HEK293 (cell line): ENCODE measurements at regions of chr1 and their contacts with region 1.

Region 1: DNA sequence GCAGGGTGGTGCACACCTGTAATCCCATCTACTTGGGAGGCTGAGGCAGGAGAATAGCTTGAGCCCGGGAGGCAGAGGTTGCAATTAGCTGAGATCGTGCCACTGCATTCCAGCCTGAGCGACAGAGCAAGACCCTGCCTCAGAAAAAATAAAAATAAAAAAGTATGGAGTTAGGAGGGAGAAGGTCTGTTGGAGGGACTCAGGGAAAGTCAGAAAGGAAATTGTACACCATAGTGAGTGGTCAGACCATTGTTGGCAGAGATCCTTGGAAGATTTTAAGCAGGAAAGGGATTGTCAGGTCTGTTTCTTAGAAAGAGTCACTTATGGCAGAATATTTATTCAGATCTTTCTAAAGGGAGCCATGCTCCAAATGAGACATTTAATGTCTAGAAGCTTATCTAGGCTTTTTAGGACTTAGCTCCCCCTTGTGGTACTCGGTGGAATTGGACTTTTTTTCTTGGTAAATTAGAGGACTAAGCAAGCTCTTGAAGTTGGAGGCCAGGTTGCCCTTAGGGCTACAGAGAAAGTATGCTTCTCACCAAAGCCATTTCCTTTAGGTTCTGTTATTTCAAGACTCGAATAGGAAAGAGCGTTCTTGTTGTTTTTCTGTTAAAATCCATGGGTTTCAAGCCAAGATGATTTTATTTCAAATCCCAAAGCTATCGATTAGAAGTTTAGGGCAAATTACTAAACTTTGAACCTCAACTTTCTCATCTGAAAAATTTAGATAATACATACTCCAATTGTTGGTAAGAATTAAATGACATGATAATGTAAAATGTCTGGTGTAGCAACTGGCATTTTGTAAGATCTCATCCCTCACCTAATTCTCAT is 16.5 kb downstream of the MIA3 start:
- H3K4me3 ChIP-seq: no peak overlapping the region
- H3K27ac ChIP-seq: no peak overlapping the region
- H3K4me1 ChIP-seq: no peaks in the 10 kb centered on the region
- CTCF ChIP-seq: peak; percentile 46; the same call in 1 of the 2 replicates

Region 2: GRCh38 chr1:222523852-222524251 is 110.5 kb before region 1 on chr1:
- CTCF ChIA-PET with region 1: no interaction called
- POLR2A ChIA-PET with region 1: no interaction called
- H3K4me3 ChIP-seq: no peak overlapping the region
- H3K27ac ChIP-seq: no peak overlapping the region
- H3K4me1 ChIP-seq: no peaks in the 10 kb centered on the region
- CTCF ChIP-seq: no peak

Region 3: DNA sequence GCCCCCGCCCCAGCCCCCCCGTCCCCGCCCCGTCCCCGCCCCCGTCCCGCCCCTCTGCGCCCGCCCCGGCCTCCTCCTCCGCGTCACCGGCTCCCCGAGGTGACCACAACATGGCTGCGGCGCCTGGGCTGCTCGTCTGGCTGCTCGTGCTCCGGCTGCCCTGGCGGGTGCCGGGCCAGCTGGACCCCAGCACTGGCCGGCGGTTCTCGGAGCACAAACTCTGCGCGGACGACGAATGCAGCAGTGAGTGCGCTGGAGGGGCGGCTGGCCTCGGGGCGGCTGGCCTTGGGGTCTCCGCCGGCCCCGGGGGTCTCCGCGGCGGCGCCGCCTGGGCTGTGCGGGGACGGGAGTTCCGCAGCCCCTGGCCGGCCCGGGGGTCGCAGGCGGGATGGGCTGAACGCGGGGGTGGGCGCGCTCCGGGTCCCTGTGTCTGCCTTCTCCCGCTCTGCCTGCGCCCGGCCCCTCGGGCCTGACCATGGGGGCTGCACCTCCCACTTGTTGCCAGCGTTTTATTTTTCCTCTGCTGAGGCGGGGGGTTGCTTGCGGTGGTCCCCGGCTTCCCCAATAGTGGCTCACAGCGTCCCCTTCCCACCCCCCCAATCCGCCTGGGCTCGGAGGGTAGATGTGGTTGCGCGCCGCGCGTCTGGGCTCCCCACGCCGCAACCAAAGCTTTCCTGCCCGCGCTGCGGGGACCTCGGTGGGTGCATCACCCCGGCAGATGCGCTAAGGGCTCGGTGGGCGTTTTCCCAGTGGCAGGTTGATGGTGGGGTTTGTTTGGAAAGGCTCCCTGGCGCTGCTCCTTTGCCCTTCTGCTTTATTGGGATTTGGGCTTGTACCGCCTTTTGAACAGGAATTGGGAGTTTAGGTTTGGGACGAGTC is 16.2 kb before region 1 on chr1 and contains the start of gene MIA3:
- CTCF ChIA-PET with region 1: interaction called, 22 read pairs
- POLR2A ChIA-PET with region 1: no interaction called
- H3K4me3 ChIP-seq: peak within 1 kb of the TSS; percentile 98
- H3K27ac ChIP-seq: peak within 1 kb of the TSS; percentile 75; the same call in 1 of the 2 replicates
- H3K4me1 ChIP-seq: no peaks in the 10 kb centered on the region
- CTCF ChIP-seq: no peak